ENCODE measurements at regions of chr11 and their contacts with region 1.

Region 1: DNA sequence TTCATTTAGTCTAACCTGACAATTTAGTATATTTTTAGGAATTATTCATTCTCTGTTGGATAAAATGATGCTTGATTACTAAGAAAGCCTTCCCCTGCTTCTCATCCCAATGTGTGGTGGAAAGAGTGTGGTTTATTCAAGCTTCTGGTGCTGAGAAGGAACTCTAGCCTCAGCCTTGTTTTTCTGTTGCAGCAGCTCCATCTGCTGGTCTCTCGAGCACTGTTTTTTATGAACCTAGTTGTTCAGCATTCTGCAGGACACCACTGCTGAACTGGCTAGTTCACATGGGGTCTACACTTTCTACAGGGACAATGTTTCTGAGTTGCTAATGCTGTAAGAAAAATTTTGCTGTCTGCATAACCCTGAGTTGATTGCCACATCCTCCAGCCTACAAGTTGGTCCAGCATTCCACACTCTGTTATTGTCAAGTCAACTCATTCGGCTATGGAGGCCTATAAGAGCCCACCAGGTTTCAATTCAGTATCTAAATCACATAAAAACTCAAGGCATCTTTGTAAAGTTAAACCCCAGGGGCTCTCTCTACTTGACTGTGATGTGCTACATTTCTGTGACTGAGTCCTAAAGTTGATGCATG is 14.3 kb downstream of the OR2AG2 start:
- DNase-seq: peak; percentile 46 to 54
- H3K4me3 ChIP-seq: no peak overlapping the region
- H3K4me3 Mint-ChIP-seq: no peak overlapping the region
- H3K27ac Mint-ChIP-seq: no peak overlapping the region
- H3K4me1 ChIP-seq: no peaks in the 10 kb centered on the region
- H3K4me1 Mint-ChIP-seq: no peaks in the 10 kb centered on the region
- H3K27me3 ChIP-seq: peaks cover 1% of the 10 kb centered on the region
- H3K27me3 Mint-ChIP-seq: peaks cover 8% of the 10 kb centered on the region
- CTCF ChIP-seq: peak; percentile 60 to 84

Region 2: DNA sequence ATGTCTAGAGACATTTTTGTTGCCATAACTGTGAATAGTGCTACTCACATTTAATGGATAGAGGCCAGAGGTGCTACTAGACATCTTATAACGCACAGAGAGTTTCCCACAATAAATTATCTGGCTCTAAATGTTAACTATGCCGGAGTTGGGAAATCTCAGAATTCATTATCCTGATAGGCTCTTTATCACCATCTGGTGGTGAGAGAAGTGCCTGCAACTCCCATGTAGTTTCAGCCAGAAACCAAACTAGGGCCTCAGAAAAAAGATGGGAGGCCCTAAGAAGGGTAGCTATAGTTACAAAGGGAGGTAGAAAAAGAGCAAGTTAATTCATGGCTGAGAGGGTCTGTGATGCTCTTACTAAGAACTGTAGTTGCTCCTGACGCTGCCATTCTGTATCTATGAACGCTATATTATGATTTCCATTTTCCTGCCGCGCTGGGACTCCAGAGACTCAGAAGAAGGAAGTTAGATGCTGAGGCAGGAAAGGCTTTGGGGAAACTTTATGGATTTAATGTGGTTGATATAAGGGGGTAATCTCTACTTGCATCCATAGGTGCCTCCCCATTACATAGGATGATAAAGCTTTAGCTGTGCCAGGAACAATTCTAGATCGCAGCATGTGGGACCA is 51.5 kb before region 1 on chr11:
- CTCF ChIA-PET with region 1: interaction called, 7 read pairs
- POLR2A ChIA-PET with region 1: no interaction called
- intact Hi-C with region 1: loop called (anchors 1 kb)
- DNase-seq: peak in 1 of 2 experiments; percentile 60
- H3K4me3 ChIP-seq: no peak overlapping the region
- H3K4me3 Mint-ChIP-seq: no peak overlapping the region
- H3K27ac Mint-ChIP-seq: no peak overlapping the region
- H3K4me1 ChIP-seq: no peaks in the 10 kb centered on the region
- H3K4me1 Mint-ChIP-seq: peaks cover 7% of the 10 kb centered on the region
- H3K27me3 ChIP-seq: no peaks in the 10 kb centered on the region
- H3K27me3 Mint-ChIP-seq: peaks cover 2% of the 10 kb centered on the region
- CTCF ChIP-seq: peak; percentile 91 to 92

Region 3: DNA sequence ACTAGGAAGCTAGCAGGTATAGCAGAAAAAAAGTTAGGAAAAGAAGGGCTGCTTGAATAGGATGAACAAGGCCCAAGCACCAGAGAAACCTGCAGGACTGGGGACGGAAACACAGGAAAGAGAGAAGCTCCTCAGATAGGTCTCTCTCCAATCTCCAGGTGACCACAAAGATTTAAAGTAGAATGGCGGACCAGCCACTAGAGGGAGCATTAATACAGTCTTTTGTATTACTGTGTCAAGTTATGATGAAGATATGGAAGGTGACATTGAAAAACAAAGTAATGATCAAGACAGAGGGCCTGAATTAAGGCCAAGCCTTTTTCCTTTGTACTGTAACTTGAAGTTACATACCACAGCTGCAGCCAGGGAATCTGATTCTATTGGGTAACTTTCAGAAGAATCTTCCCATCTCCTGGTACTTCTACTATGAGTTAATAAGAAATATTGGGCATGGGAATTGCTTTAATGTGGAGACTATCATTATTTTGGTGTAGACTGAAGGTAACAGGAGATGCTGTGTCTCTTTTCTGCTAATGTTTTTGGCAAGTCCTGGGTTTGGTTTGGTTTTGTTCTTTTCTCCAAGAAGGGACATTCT is 19.5 kb before region 1 on chr11:
- CTCF ChIA-PET with region 1: interaction called, 14 read pairs
- POLR2A ChIA-PET with region 1: no interaction called
- intact Hi-C with region 1: loop called (anchors 1 kb)
- DNase-seq: peak; percentile 53 to 64
- H3K4me3 ChIP-seq: no peak overlapping the region
- H3K4me3 Mint-ChIP-seq: no peak overlapping the region
- H3K27ac Mint-ChIP-seq: no peak overlapping the region
- H3K4me1 ChIP-seq: no peaks in the 10 kb centered on the region
- H3K4me1 Mint-ChIP-seq: no peaks in the 10 kb centered on the region
- H3K27me3 ChIP-seq: no peaks in the 10 kb centered on the region
- H3K27me3 Mint-ChIP-seq: peaks cover 22% of the 10 kb centered on the region
- CTCF ChIP-seq: peak; percentile 62 to 71